ENCODE measurements at regions of chr10 and their contacts with region 1.

Region 1: DNA sequence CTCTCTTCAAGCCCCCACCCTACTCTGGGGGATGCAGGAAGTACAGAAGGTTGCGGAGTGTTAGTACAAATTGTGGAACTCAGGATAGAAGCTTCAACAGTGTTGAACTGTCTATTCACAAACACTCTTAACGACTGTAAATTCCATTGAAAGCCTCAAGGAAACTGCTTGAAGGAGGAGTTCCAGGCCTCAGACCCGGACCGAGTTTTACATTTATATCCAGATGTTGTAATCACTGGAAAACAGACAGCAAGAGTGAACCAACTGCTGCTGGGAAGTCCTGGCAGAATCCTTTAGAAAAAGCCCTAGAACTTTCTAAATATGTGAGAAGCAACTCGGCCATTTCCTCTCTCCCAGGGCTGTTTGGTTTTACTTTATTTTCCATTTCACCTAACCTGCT is 84.1 kb upstream of the LRRC18 start:
- DNase-seq: no peak
- H3K4me3 ChIP-seq: no peak overlapping the region
- H3K27ac ChIP-seq: peak overlapping the region; percentile 39 to 68 (median 56)
- H3K4me1 ChIP-seq: peaks cover 0 to 19% (median 14%) of the 10 kb centered on the region in 4 donors
- H3K27me3 ChIP-seq: no peaks in the 10 kb centered on the region
- CTCF ChIP-seq: no peak
- EP300 ChIP-seq: no peak
- POLR2A ChIP-seq: no peak

Region 2: DNA sequence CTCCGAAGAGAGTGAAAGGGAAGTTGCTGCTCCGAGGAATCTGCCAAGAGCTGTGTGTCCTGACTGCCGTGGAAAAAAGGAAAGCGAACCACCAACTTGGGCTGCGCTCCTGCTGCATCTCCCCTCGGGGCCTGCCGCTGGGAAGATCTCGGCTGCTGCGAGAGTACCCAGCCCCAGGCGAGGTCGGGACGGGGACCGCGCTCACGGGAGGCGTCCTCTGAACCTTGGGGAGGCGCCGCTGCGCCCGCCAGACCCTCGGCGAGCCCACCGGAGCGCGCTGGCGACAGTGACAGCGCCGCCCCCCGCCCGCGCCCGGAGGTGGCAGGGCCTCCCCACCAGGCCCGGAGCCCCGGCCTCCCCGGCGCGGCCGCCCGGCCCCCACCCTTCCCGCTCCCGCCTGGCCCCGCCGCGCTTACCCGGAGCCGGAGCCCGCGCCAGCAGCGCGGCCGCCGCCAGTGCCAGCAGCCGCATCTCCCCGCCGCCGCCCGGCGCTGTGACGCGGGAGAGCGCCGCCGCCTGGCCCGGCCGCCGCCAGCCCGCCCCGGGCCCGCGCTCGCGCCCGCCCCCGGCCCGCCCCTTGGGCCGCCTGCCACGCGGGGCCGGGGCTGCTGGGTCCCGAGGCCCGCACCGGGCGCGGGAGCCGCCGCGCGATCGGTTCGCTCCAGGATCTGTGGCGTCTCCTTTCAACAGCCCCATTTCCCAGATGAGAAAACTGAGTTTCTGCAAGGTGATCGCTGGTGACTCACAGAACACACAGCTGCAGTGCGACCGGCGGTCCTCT is 91.5 kb after region 1 on chr10 and contains the start of gene VSTM4:
- intact Hi-C with region 1: loop called (anchors 10 kb)
- DNase-seq: peak; percentile 80
- H3K4me3 ChIP-seq: peak within 1 kb of the TSS; percentile 54 to 77 (median 68)
- H3K27ac ChIP-seq: peak within 1 kb of the TSS; percentile 80 to 89 (median 86)
- H3K4me1 ChIP-seq: peaks cover 0 to 43% (median 19%) of the 10 kb centered on the region in 4 donors
- H3K27me3 ChIP-seq: no peaks in the 10 kb centered on the region
- CTCF ChIP-seq: no peak
- EP300 ChIP-seq: no peak
- POLR2A ChIP-seq: no peak
- total RNA-seq, gene VSTM4: 9.5 to 13.3 (median 10.9) TPM

Region 3: DNA sequence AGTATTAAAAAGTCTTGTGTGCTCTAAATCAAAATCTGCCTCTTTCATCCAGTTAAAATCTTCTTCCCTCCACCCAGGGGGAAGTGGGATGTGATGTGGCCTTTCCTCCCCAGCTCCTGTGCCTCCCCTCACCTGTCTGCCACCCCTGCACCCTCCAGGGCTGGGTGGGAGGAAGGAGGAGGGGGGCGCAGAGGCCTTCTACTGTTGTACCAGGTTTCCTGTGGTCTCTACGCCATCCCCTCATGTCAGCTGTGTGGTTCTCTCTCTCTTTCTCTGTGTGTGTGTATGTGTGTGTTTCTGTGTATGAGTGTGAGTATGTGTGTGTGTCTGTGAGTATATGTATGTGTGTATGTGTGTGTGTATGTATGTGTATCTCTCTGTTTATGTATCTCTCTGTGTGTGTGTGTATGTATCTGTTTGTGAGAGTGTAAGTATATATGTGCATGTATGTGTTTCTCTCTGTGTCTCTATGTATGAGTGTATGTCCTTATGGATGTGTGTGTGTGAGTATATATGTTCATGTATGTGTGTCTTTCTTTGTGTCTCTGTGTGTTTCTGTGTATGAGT is 229.7 kb after region 1 on chr10:
- intact Hi-C with region 1: no loop called
- DNase-seq: no peak
- H3K4me3 ChIP-seq: no peak overlapping the region
- H3K27ac ChIP-seq: no peak overlapping the region
- H3K4me1 ChIP-seq: no peaks in the 10 kb centered on the region
- H3K27me3 ChIP-seq: no peaks in the 10 kb centered on the region
- CTCF ChIP-seq: no peak
- EP300 ChIP-seq: no peak
- POLR2A ChIP-seq: no peak

Region 4: GRCh38 chr10:49435224-49435623 is 411.5 kb after region 1 on chr10:
- intact Hi-C with region 1: no loop called
- DNase-seq: no peak
- H3K4me3 ChIP-seq: no peak overlapping the region
- H3K27ac ChIP-seq: no peak overlapping the region
- H3K4me1 ChIP-seq: no peaks in the 10 kb centered on the region
- H3K27me3 ChIP-seq: no peaks in the 10 kb centered on the region
- CTCF ChIP-seq: no peak
- EP300 ChIP-seq: no peak
- POLR2A ChIP-seq: no peak

Measured in sigmoid colon (tissue), 7 donors.